ENCODE measurements at regions of chr1 and their contacts with region 1.

Region 1: GRCh38 chr1:59046730-59047157 is 250.2 kb upstream of the FGGY start:
- DNase-seq: peak; percentile 59
- ATAC-seq: peak; percentile 99
- H3K4me3 ChIP-seq: no peak overlapping the region
- H3K27ac ChIP-seq: peak overlapping the region; percentile 70
- H3K4me1 ChIP-seq: peaks cover 26% of the 10 kb centered on the region
- H3K27me3 ChIP-seq: no peaks in the 10 kb centered on the region
- CTCF ChIP-seq: peak; percentile 42 to 45 (median 44); a peak in 5 of 6 replicates
- EP300 ChIP-seq: peak in 1 of 2 experiments; percentile 45; a peak in 1 of 4 replicates
- POLR2A ChIP-seq: no peak
- RAD21 ChIP-seq: peak; percentile 66

Region 2: GRCh38 chr1:59020151-59020997 is 26.4 kb before region 1 on chr1:
- CTCF ChIA-PET with region 1: interaction called, 4 read pairs
- POLR2A ChIA-PET with region 1: interaction called, 5 read pairs
- RAD21 ChIA-PET with region 1: interaction called, 8 read pairs
- SMC1A ChIA-PET with region 1: interaction called, 12 read pairs
- in situ Hi-C with region 1: no loop called
- intact Hi-C with region 1: no loop called
- DNase-seq: peak; percentile 87
- ATAC-seq: peak; percentile 93
- H3K4me3 ChIP-seq: peak overlapping the region; percentile 53; the same call in 1 of the 2 replicates
- H3K27ac ChIP-seq: peak overlapping the region; percentile 75
- H3K4me1 ChIP-seq: peaks cover 20% of the 10 kb centered on the region
- H3K27me3 ChIP-seq: no peaks in the 10 kb centered on the region
- CTCF ChIP-seq: no peak
- EP300 ChIP-seq: no peak
- POLR2A ChIP-seq: no peak
- RAD21 ChIP-seq: peak; percentile 12; the same call in 1 of the 2 replicates

Region 3: DNA sequence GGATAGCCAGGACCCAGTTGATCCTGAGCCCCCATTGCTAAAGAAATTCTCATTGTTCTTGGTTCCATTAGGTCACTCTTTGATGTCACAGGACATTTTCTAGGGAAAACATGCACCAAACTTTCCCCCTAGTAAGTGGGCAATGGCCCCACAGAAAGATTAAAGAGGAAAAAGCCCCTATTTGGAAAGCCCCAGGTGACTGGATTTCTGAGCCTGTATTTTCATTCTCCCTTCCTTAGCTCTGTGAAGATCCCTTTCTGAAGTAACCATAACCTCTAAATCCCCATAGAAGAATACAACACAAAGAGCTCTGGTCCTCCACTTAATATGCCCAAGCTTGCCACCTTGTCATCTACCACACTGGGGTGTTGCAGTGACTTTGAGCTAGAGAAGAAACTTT is 17.8 kb after region 1 on chr1:
- CTCF ChIA-PET with region 1: interaction called, 7 read pairs
- POLR2A ChIA-PET with region 1: no interaction called
- RAD21 ChIA-PET with region 1: interaction called, 5 read pairs
- SMC1A ChIA-PET with region 1: interaction called, 14 read pairs
- in situ Hi-C with region 1: no loop called
- intact Hi-C with region 1: no loop called
- DNase-seq: no peak
- ATAC-seq: peak; percentile 55
- H3K4me3 ChIP-seq: no peak overlapping the region
- H3K27ac ChIP-seq: no peak overlapping the region
- H3K4me1 ChIP-seq: no peaks in the 10 kb centered on the region
- H3K27me3 ChIP-seq: no peaks in the 10 kb centered on the region
- CTCF ChIP-seq: no peak
- EP300 ChIP-seq: no peak
- POLR2A ChIP-seq: no peak
- RAD21 ChIP-seq: no peak

Measured in GM12878 (cell line).